CD4-positive, alpha-beta T cell (primary cell): ENCODE measurements at regions of chr17 and their contacts with region 1.

Region 1: DNA sequence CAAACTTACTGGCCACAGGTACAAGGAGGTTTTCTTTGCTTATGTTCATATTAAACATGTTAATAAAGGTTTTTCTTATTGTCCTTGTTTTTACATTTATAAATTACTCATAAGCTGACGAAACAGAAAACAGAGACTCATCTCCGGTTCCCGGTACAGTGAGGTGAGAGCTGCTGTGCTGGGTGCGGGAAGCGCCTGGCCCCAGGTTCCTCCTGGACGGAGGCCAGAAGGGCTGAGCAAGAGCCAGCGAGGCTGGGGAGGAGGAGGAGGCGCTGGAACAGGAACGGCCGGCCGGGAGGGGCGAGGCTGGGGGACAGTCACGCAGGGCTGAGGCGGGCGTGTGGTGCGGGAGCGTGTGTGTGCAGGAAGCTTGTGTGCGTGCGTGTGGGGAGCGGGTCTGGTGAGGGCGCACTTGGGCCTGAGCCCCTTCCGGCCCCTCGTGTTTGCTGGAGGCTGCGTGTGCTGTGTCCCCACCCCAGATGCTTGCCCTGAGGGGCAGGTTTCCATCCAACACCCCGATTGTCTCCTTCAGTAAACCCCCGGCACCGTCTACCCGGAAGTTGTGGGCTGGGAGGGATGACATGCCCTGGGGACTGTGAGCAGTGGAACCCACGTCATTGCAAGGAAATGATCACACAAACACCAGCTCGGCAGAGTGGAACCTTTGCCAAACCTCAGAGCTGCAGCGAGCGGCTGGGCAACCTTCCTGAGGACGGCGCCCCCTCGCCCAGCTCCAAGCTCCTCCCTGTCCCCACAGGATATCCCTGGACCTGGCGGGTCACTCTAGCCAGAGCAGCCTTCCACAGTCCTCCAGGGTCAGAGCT is 19.5 kb downstream of the CD7 start:
- DNase-seq: peak; percentile 84 to 98 (median 90)
- ATAC-seq: peak; percentile 70
- H3K4me3 ChIP-seq: peak overlapping the region; percentile 70
- H3K4me3 Mint-ChIP-seq: peak overlapping the region; percentile 96
- H3K27ac ChIP-seq: peak overlapping the region; percentile 99 to 100
- H3K27ac Mint-ChIP-seq: peak overlapping the region; percentile 100
- H3K4me1 ChIP-seq: peaks cover 79% of the 10 kb centered on the region
- H3K4me1 Mint-ChIP-seq: peaks cover 84% of the 10 kb centered on the region
- H3K27me3 ChIP-seq: no peaks in the 10 kb centered on the region
- H3K27me3 Mint-ChIP-seq: no peaks in the 10 kb centered on the region
- CTCF ChIP-seq: no peak

Region 2: DNA sequence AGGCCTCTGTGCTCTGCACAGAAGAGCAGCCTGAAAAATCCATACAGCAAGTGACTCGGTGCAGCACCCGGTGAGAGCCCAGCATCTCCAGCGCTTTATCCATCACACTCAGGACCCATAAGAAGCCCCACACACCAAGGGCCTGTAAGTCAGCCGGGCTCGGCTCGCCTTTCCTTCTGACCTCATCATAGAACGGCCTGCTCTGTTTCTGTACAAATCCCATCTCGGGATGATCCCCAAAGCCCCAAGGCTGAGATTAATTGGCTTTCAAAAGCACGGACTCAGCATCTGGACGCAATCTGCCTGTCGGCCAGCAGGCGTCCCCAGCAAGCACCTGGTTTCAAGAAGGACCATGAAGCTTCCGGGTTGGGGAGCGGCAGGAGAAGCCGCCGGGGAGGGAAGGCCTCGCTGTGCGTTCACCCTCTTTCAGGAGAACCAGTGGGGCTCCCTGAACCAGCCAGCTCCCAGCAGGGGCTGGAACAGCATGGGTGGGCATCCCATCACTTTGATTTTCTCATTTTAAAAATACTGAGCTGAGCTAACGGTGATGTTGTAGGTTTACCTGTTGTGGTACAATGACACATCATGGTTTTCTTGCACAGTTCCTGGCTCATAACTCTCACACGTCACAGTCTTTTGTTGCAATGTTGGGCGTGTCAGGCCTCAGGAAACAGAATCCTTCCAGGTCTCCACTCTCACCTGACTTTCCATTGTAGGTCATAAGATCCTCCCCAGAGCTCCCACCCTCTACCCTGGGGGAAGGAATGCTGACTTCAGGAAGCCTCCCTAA is 92.0 kb before region 1 on chr17:
- CTCF ChIA-PET with region 1: interaction called, 8 read pairs
- POLR2A ChIA-PET with region 1: interaction called, 23 read pairs
- intact Hi-C with region 1: loop called in 1 of 2 experiments (anchors 10 kb)
- DNase-seq: peak; percentile 60 to 91 (median 77)
- ATAC-seq: peak; percentile 86
- H3K4me3 ChIP-seq: peak overlapping the region; percentile 16
- H3K4me3 Mint-ChIP-seq: peak overlapping the region; percentile 23
- H3K27ac ChIP-seq: peak overlapping the region; percentile 77 to 79
- H3K27ac Mint-ChIP-seq: peak overlapping the region; percentile 95
- H3K4me1 ChIP-seq: peaks cover 25% of the 10 kb centered on the region
- H3K4me1 Mint-ChIP-seq: peaks cover 50% of the 10 kb centered on the region
- H3K27me3 ChIP-seq: no peaks in the 10 kb centered on the region
- H3K27me3 Mint-ChIP-seq: no peaks in the 10 kb centered on the region
- CTCF ChIP-seq: peak; percentile 92

Region 3: DNA sequence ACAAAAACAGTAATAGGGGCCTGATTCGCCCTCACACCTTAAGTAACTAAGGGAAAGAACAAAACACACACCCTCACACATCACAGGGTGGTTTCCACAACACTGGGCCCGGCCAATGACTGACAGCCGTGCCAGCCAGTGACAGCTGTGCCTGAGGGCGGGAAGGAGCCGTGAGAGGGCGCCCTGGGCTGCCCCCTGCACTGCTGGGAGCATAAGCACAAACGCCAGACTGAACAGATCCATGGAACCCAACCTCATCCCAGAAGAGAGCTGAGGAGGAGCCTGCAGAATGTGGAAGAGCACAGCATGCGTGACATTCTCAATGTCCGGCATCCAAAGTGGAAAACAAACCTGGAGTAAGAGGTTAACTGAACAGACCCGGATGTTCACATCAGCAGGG is 40.5 kb before region 1 on chr17:
- CTCF ChIA-PET with region 1: no interaction called
- POLR2A ChIA-PET with region 1: interaction called, 3 read pairs
- intact Hi-C with region 1: loop called in 1 of 2 experiments (anchors 5 kb)
- DNase-seq: peak in 9 of 14 experiments; percentile 27 to 78 (median 59)
- ATAC-seq: peak; percentile 86
- H3K4me3 ChIP-seq: no peak overlapping the region
- H3K4me3 Mint-ChIP-seq: no peak overlapping the region
- H3K27ac ChIP-seq: no peak overlapping the region
- H3K27ac Mint-ChIP-seq: peak overlapping the region; percentile 80
- H3K4me1 ChIP-seq: peaks cover 7% of the 10 kb centered on the region
- H3K4me1 Mint-ChIP-seq: peaks cover 23% of the 10 kb centered on the region
- H3K27me3 ChIP-seq: no peaks in the 10 kb centered on the region
- H3K27me3 Mint-ChIP-seq: no peaks in the 10 kb centered on the region
- CTCF ChIP-seq: no peak

Region 4: DNA sequence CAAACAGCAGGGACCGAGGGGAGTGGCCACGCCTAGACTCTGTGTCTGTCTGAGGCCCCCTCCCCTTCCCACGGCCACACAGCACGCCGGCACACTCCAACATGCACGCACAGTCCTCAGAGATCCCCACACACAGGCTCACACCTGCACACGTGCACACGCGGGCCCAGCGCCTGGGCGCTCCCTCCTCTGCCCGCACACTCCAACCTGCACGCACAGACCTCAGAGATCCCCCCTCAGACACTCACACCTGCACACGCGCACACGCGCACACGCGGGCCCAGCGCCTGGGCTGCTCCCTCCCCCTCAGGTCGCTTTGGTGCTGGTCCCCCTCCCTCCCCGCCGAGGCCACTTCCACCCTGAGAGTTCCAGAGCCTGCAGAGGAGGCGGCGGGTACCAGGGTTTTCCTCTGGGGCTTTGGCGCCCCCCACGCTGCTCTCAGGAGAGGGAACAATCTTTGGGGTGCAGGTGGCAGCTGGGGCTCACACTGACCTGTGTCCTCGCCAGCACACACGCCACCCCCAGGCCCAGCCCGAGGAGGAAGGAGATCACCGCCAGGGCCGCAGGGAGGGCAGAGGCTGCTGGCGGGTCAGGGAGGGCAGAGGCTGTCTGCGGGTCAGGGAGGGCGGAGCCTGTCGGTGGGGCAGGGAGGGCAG is 17.9 kb after region 1 on chr17:
- CTCF ChIA-PET with region 1: interaction called, 16 read pairs
- POLR2A ChIA-PET with region 1: interaction called, 157 read pairs
- intact Hi-C with region 1: loop called (anchors 1 kb)
- DNase-seq: peak in 11 of 14 experiments; percentile 43 to 78 (median 68)
- ATAC-seq: peak; percentile 45
- H3K4me3 ChIP-seq: peak overlapping the region; percentile 81
- H3K4me3 Mint-ChIP-seq: peak overlapping the region; percentile 99
- H3K27ac ChIP-seq: peak overlapping the region; percentile 31 to 80
- H3K27ac Mint-ChIP-seq: no peak overlapping the region
- H3K4me1 ChIP-seq: peaks cover 58% of the 10 kb centered on the region
- H3K4me1 Mint-ChIP-seq: peaks cover 25% of the 10 kb centered on the region
- H3K27me3 ChIP-seq: no peaks in the 10 kb centered on the region
- H3K27me3 Mint-ChIP-seq: no peaks in the 10 kb centered on the region
- CTCF ChIP-seq: no peak

Region 5: GRCh38 chr17:82332669-82333278 is 34.8 kb after region 1 on chr17:
- CTCF ChIA-PET with region 1: interaction called, 3 read pairs
- POLR2A ChIA-PET with region 1: interaction called, 33 read pairs
- intact Hi-C with region 1: loop called in 1 of 2 experiments (anchors 5 kb)
- DNase-seq: peak in 6 of 14 experiments; percentile 20 to 77 (median 40)
- ATAC-seq: peak; percentile 57
- H3K4me3 ChIP-seq: peak overlapping the region; percentile 63
- H3K4me3 Mint-ChIP-seq: peak overlapping the region; percentile 93
- H3K27ac ChIP-seq: no peak overlapping the region
- H3K27ac Mint-ChIP-seq: peak overlapping the region; percentile 57
- H3K4me1 ChIP-seq: peaks cover 39% of the 10 kb centered on the region
- H3K4me1 Mint-ChIP-seq: peaks cover 13% of the 10 kb centered on the region
- H3K27me3 ChIP-seq: peaks cover 0 to 8% of the 10 kb centered on the region in 2 experiments
- H3K27me3 Mint-ChIP-seq: peaks cover 4% of the 10 kb centered on the region
- CTCF ChIP-seq: no peak

Region 6: GRCh38 chr17:82518826-82519810 is 221.2 kb after region 1 on chr17 and contains the start of gene FOXK2:
- CTCF ChIA-PET with region 1: no interaction called
- POLR2A ChIA-PET with region 1: interaction called, 10 read pairs
- intact Hi-C with region 1: no loop called
- DNase-seq: peak; percentile 84 to 97 (median 92)
- ATAC-seq: peak; percentile 98
- H3K4me3 ChIP-seq: peak within 1 kb of the TSS; percentile 66
- H3K4me3 Mint-ChIP-seq: peak within 1 kb of the TSS; percentile 88
- H3K27ac ChIP-seq: peak within 1 kb of the TSS; percentile 50 to 71
- H3K27ac Mint-ChIP-seq: peak within 1 kb of the TSS; percentile 84
- H3K4me1 ChIP-seq: peaks cover 38% of the 10 kb centered on the region
- H3K4me1 Mint-ChIP-seq: peaks cover 25% of the 10 kb centered on the region
- H3K27me3 ChIP-seq: no peaks in the 10 kb centered on the region
- H3K27me3 Mint-ChIP-seq: no peaks in the 10 kb centered on the region
- CTCF ChIP-seq: no peak
- total RNA-seq, gene FOXK2: 32.5 to 33.7 TPM